Body of pancreas (tissue), 4 donors: ENCODE measurements at regions of chr5 and their contacts with region 1.

Region 1: DNA sequence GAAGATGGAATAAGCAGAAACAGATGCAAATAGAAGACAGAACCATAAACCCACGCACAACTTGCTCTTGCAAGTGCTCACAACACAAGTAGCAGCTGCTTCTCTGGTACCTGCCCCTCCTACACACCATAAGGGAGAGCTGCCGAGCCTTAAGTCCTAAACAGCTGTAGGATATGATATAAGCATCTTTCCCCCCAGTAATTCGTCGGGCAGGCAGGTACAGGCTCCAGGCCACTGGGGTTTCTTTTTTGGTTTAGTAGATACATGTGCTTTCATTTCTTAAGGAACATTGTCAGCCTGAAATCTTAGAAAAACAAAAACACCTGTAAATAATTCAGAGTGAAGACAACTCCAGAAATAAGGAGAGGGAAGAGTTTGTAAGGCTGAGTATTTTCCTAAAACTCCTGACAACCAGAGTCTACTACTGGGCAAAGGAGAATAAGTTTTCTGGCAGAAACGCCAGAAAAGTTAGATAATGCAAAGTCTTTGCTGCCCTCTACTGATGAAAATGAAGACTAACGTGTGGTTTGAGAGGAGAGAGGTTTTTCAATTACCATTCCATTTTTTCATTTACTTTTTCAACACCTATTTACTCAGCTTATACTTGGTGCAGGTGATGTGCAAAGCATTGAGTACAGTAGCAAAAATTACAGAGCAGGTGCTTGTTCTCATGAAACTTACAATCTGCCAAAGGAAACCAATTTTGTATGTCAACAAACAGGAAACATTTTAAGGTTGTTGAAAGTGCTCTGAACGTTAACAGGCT is 20.1 kb upstream of the TCERG1 start:
- DNase-seq: no peak
- ATAC-seq: peak; percentile 56
- H3K4me3 ChIP-seq: no peak overlapping the region
- H3K27ac ChIP-seq: no peak overlapping the region
- H3K4me1 ChIP-seq: no peaks in the 10 kb centered on the region
- H3K27me3 ChIP-seq: no peaks in the 10 kb centered on the region
- CTCF ChIP-seq: peak; percentile 35 to 75 (median 67)
- POLR2A ChIP-seq: no peak

Region 2: GRCh38 chr5:146291421-146292074 is 135.5 kb before region 1 on chr5:
- intact Hi-C with region 1: loop called (anchors 5 kb)
- DNase-seq: peak in 1 of 4 donors; percentile 22
- ATAC-seq: peak; percentile 35
- H3K4me3 ChIP-seq: no peak overlapping the region
- H3K27ac ChIP-seq: no peak overlapping the region
- H3K4me1 ChIP-seq: no peaks in the 10 kb centered on the region
- H3K27me3 ChIP-seq: no peaks in the 10 kb centered on the region
- CTCF ChIP-seq: peak; percentile 25 to 58 (median 51)
- POLR2A ChIP-seq: no peak